A549 (cell line): ENCODE measurements at regions of chr12 and their contacts with region 1.

Region 1: GRCh38 chr12:47032644-47033043 is 46.8 kb upstream of the PCED1B start:
- DNase-seq: peak in 1 of 2 experiments; percentile 85
- ATAC-seq: peak; percentile 59 to 80; a peak in 4 of 6 replicates
- H3K4me3 ChIP-seq: no peak overlapping the region
- H3K27ac ChIP-seq: peak overlapping the region; percentile 88 to 93
- H3K4me1 ChIP-seq: peaks cover 50% of the 10 kb centered on the region
- CTCF ChIP-seq: peak; percentile 93
- EP300 ChIP-seq: no peak
- POLR2A ChIP-seq: no peak
- RAD21 ChIP-seq: peak; percentile 92 to 97

Region 2: DNA sequence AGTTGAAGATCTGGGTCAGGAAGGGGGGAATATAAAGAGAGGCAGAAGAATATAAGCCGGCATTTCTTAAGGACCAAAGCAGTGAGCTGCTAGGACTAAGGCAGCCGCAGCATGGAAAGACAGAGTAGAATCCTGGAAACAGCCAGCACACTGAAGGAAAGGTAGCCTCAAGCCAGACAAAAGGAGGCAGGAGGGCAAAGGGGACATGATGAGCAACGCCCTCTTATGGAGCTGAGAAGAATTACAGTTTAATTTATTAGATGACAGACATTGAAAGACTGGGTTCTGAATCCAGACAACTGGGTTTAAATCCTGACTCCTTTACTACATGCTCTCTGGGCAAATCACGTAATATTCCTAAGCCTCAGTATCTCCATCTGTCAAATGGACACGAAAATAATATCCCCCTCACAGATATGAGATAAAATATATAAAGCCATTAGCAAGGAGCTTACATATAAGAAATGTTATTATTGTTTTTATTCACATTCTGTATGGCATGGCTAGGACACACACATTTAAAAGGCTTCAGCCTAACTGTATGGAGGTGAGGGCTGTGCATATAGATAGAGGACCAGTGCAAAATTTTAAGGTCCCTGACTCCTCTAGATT is 38.7 kb after region 1 on chr12:
- CTCF ChIA-PET with region 1: interaction called, 93 read pairs
- POLR2A ChIA-PET with region 1: interaction called, 18 read pairs
- DNase-seq: peak in 1 of 2 experiments; percentile 72
- ATAC-seq: peak; percentile 4 to 11; a peak in 3 of 6 replicates
- H3K4me3 ChIP-seq: no peak overlapping the region
- H3K27ac ChIP-seq: peak overlapping the region; percentile 61 to 73; a peak in 5 of 6 replicates
- H3K4me1 ChIP-seq: peaks cover 83% of the 10 kb centered on the region
- CTCF ChIP-seq: peak; percentile 62
- EP300 ChIP-seq: no peak
- POLR2A ChIP-seq: no peak
- RAD21 ChIP-seq: peak; percentile 40 to 63; a peak in 3 of 5 replicates

Region 3: GRCh38 chr12:47218191-47218654 is 185.6 kb after region 1 on chr12:
- CTCF ChIA-PET with region 1: interaction called, 14 read pairs
- POLR2A ChIA-PET with region 1: interaction called, 3 read pairs
- DNase-seq: no peak
- ATAC-seq: no peak
- H3K4me3 ChIP-seq: no peak overlapping the region
- H3K27ac ChIP-seq: peak overlapping the region; percentile 98 to 99
- H3K4me1 ChIP-seq: peaks cover 76% of the 10 kb centered on the region
- CTCF ChIP-seq: no peak
- EP300 ChIP-seq: no peak
- POLR2A ChIP-seq: no peak
- RAD21 ChIP-seq: no peak

Region 4: DNA sequence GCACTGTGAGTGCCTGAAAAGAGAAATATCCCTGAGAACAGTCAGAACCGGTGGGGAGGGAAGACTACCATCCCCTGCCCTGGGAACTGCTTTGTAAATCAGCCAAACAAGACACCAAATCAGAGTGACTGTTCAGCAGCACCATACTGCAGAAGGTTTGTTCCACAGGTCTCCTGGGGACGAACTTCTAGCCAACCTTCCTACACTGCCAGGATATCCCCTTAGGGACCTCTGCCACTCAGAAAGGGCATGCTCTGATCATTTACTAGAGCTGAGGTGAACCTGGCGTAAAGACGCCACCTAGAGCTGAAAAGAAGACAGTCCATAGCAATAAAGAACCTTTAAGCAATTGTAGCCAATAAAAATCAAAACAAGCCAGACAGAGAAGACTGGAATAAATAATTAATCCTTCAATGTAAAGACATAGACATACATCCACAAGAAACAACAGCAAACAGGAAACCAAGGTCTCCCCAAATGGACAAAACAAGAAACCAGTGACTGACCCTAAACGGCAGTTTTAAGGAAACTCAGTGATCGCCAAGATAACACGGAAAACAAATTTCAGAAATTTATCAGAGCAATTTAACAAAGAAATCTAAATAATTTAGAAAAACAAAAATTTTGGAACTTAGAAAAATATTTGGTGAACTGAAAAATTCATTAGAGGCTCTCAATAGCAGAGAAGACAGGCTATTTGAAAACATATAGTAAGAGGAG is 275.2 kb after region 1 on chr12:
- CTCF ChIA-PET with region 1: interaction called, 15 read pairs
- POLR2A ChIA-PET with region 1: no interaction called
- DNase-seq: peak; percentile 49 to 93
- ATAC-seq: peak; percentile 92 to 99
- H3K4me3 ChIP-seq: no peak overlapping the region
- H3K27ac ChIP-seq: peak overlapping the region; percentile 85 to 86
- H3K4me1 ChIP-seq: peaks cover 30% of the 10 kb centered on the region
- CTCF ChIP-seq: peak; percentile 77
- EP300 ChIP-seq: no peak
- POLR2A ChIP-seq: no peak
- RAD21 ChIP-seq: peak; percentile 90 to 99

Region 5: DNA sequence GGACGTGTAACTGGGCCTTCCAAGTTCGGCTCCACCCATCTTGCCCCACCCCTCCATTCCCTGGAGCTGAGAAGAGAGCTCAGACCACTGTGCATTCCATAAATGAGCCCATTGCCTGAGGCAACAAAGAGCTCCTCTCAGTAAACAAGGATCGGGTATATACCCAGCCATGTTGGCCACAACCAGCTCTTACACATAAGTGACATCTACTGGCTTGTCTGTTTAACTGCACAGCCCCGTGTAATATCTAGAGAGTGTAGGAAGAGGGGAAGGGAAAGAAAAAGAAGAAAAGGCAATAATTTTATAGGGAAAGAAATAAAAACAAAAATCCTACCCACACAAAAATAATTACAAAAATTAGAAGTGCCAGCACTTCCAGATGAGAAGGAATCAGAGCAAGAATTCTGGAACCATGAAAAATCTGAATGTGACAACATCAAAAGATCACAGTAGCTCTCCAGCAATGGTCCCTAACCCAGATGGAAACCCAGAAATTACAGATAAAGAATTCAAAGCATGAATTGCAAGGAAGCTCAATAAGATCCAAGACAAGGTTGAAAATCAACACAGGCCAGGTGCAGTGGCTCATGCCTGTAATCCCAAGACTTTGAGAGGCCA is 365.1 kb after region 1 on chr12:
- CTCF ChIA-PET with region 1: interaction called, 30 read pairs
- POLR2A ChIA-PET with region 1: no interaction called
- DNase-seq: peak; percentile 51 to 95
- ATAC-seq: peak; percentile 88 to 93
- H3K4me3 ChIP-seq: no peak overlapping the region
- H3K27ac ChIP-seq: peak overlapping the region; percentile 73 to 86
- H3K4me1 ChIP-seq: peaks cover 34% of the 10 kb centered on the region
- CTCF ChIP-seq: peak; percentile 55
- EP300 ChIP-seq: no peak
- POLR2A ChIP-seq: no peak
- RAD21 ChIP-seq: peak; percentile 81 to 94

Region 6: GRCh38 chr12:47651368-47652254 is 619.0 kb after region 1 on chr12:
- CTCF ChIA-PET with region 1: interaction called, 16 read pairs
- POLR2A ChIA-PET with region 1: no interaction called
- DNase-seq: peak; percentile 32 to 75
- ATAC-seq: peak; percentile 95
- H3K4me3 ChIP-seq: 0 out of 3 replicates have a peak overlapping the region, but pooled peaks have one; percentile 14
- H3K27ac ChIP-seq: peak overlapping the region; percentile 61 to 82
- H3K4me1 ChIP-seq: peaks cover 28% of the 10 kb centered on the region
- CTCF ChIP-seq: peak; percentile 74
- EP300 ChIP-seq: no peak
- POLR2A ChIP-seq: no peak
- RAD21 ChIP-seq: peak; percentile 76 to 79

Region 7: DNA sequence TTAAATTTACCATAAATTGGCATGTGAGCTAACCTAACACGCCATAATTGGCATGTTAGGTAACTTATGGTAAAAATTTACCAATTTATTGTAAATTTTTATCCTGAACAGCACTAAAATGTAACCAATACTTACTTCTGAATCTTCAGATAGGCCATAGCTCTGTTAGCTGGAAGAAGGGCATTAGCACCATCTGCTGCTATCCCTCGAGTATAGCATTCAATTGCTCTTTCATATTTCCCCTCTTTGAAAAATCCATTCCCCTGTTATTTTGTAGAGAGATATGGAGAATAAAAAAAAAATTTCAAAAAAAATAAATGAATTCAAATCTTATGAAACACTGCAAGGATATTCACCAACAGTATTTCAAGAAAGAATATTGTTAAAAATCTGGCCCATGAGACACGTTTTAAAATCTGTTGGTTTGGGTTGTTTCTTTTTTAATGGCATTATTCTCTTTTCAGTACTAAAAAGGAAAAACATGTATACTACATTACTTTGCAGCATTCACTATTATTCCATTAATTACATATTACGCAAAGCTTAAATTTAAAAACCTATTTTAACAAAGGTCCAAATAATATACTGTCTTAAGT is 654.1 kb after region 1 on chr12:
- CTCF ChIA-PET with region 1: interaction called, 47 read pairs
- POLR2A ChIA-PET with region 1: interaction called, 5 read pairs
- DNase-seq: peak; percentile 53 to 66
- ATAC-seq: peak; percentile 70 to 83
- H3K4me3 ChIP-seq: no peak overlapping the region
- H3K27ac ChIP-seq: peak overlapping the region; percentile 14 to 45; a peak in 3 of 6 replicates
- H3K4me1 ChIP-seq: peaks cover 3% of the 10 kb centered on the region; the same call in 1 of the 3 replicates
- CTCF ChIP-seq: peak; percentile 93
- EP300 ChIP-seq: no peak
- POLR2A ChIP-seq: no peak
- RAD21 ChIP-seq: peak; percentile 89 to 91